Heart right ventricle (tissue), 16 donors: ENCODE measurements at regions of chr2 and their contacts with region 1.

Region 1: DNA sequence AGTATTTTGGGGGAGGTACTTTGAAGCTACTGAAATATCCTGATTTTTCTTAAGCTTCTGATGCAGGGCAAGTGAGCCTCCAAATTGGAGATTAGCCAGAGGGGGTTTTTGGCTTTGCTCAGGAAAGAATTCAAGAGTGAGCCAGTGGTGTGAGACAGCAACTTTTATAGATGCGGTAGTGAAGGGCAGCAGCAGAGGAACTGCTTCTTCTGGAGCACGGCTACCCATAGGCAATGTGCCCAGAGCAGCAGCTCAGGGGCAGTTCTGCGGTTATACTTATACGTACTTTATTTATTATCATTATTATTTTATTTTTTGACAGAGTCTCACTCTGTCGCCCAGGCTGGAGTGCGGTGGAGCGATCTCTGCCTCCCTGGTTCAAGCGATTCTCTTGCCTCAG is 19.8 kb upstream of the NT5DC4 start:
- DNase-seq: no peak
- ATAC-seq: peak in 4 of 8 donors; percentile 46 to 66 (median 52)
- H3K4me3 ChIP-seq: no peak overlapping the region
- H3K27ac ChIP-seq: peak overlapping the region in 2 of 10 donors; percentile 21 to 87
- H3K4me1 ChIP-seq: peaks cover 0 to 44% (median 0%) of the 10 kb centered on the region in 9 donors
- H3K27me3 ChIP-seq: peaks cover 0 to 18% (median 0%) of the 10 kb centered on the region in 7 donors
- CTCF ChIP-seq: no peak

Region 2: DNA sequence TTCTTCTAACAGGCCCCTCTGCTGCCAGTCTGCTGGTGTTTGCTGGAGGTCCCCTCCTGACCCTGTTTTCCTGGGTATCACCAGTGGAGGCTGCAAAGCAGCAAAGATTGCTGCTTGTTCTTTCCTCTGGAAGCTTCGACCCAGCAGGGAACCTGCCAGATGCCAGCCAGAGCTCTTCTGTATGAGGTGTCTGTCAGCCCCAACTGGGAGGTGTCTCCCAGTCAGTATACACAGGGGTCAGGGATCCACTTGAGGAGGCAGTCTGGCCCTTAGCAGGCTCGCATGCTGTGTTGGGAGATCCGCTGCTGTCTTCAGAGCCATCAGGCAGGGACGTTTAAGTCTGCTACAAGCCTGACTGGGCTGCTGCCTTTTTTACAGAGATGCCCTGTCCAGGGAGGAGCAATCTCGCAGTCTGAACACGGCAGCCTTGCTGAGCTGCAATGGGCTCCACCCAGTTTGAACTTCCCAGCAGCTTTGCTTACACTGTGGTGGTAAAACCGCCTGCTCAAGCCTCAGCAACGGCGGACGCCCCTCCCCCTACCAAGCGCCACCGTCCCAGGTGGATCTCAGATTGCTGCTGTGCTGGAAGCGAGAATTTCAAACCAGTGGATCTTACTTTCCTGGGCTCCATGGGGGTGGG is 86.7 kb before region 1 on chr2:
- intact Hi-C with region 1: loop called in 1 of 10 experiments (anchors 5 kb)
- DNase-seq: no peak
- ATAC-seq: no peak
- H3K4me3 ChIP-seq: no peak overlapping the region
- H3K27ac ChIP-seq: no peak overlapping the region
- H3K4me1 ChIP-seq: peaks cover 0 to 9% (median 0%) of the 10 kb centered on the region in 9 donors
- H3K27me3 ChIP-seq: no peaks in the 10 kb centered on the region
- CTCF ChIP-seq: no peak